H1 (cell line): ENCODE measurements at regions of chr18 and their contacts with region 1.

Region 1: DNA sequence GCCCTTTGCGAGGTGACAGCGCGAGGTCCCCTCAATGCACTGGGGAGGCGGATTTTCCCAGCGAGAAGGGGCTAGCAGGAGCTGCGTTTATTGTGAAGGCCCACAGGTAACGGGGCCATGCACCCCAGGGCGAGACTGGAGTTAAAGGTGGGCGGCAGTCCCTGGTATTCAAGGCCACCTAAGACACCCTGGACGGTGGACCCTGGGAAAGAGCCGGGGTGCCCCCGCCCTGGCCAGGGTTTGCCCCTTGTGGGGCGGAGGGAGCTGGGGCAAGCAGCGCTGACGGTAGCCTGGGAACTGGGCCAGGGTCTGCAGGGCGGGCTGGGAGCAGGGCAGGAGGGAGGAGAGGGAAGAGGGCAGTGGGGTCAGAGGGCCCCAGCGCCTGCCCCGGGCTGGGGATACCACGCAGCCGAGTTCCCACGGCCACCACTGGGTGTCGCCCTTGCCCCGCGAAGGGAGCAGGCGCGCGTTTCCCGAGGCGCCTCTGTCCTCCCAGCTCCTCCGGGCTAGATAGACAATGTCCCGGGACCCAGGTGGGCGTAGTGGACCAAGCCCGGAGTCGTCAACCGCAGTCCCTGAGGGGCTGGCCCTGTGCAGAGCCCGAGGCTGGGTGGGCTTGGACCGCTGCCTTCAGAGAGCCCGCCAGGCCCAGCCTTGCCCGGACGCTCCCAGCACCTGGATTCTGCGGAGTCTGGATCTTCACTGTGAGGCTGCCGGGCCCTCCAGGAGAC is 80.2 kb downstream of the SMAD4 start:
- DNase-seq: peak in 1 of 2 experiments; percentile 98
- H3K4me3 ChIP-seq: no peak overlapping the region
- H3K27ac ChIP-seq: no peak overlapping the region
- H3K4me1 ChIP-seq: peaks cover 0 to 2% (median 0%) of the 10 kb centered on the region in 4 experiments; a peak in 2 of 7 replicates
- H3K27me3 ChIP-seq: no peaks in the 10 kb centered on the region
- CTCF ChIP-seq: peak; percentile 90 to 99 (median 93)
- EP300 ChIP-seq: no peak
- POLR2A ChIP-seq: no peak
- RAD21 ChIP-seq: peak; percentile 98 to 99

Region 2: DNA sequence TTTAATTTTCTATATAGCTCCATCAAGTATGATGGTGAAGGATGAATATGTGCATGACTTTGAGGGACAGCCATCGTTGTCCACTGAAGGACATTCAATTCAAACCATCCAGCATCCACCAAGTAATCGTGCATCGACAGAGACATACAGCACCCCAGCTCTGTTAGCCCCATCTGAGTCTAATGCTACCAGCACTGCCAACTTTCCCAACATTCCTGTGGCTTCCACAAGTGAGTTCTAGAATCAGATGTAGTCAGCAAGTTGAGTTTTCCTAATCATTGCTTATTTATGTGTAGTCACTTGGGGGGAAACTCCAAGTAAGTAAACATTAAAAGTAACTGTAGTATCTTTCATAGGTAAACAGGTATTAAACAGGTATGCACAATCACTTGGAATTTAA is 55.5 kb before region 1 on chr18:
- CTCF ChIA-PET with region 1: no interaction called
- POLR2A ChIA-PET with region 1: no interaction called
- DNase-seq: no peak
- H3K4me3 ChIP-seq: no peak overlapping the region
- H3K27ac ChIP-seq: no peak overlapping the region
- H3K4me1 ChIP-seq: peaks cover 0 to 3% (median 0%) of the 10 kb centered on the region in 4 experiments; a peak in 1 of 7 replicates
- H3K27me3 ChIP-seq: no peaks in the 10 kb centered on the region
- CTCF ChIP-seq: no peak
- EP300 ChIP-seq: no peak
- POLR2A ChIP-seq: no peak
- RAD21 ChIP-seq: no peak

Region 3: DNA sequence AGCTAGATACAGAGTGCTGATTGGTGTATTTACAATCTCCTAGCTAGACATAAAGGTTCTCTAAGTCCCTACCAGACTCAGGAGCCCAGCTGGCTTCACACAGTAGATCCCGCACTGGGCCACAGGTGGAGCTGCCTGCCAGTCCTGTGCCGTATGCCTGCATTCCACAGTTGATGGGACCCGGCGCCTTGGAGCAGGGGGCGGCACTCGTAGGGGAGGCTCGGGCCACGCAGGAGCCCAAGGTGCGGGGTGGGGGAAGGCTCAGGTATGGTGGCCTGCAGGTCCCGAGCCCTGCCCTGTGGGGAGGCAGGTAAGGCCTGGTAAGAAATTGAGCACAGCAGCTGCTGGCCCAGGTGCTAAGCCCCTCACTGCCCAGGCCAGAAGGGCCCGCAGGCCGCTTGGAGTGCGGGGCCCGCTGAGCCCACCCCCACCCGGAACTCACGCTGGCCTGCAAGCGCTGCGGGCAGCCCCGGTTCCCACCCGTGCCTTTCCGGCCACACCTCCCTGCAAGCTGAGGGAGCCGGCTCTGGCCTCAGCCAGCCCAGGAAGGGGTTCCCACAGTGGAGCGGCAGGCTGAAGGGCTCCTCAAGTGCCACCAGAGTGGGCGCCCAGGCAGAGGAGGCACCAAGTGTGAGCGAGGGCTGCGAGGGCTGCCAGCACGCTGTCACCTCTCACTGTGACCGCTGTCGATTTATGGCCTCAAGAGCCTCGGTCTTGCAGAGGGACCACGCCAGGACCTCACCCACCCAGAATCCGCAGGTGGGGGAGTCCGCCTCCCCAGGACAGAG is 10.8 kb after region 1 on chr18:
- CTCF ChIA-PET with region 1: interaction called, 56 read pairs
- POLR2A ChIA-PET with region 1: no interaction called
- DNase-seq: no peak
- H3K4me3 ChIP-seq: no peak overlapping the region
- H3K27ac ChIP-seq: no peak overlapping the region
- H3K4me1 ChIP-seq: peaks cover 0 to 5% (median 0%) of the 10 kb centered on the region in 4 experiments; a peak in 1 of 7 replicates
- H3K27me3 ChIP-seq: no peaks in the 10 kb centered on the region
- CTCF ChIP-seq: peak; percentile 8 to 40 (median 18); a peak in 2 of 4 replicates
- EP300 ChIP-seq: no peak
- POLR2A ChIP-seq: no peak
- RAD21 ChIP-seq: peak; percentile 31 to 46; a peak in 3 of 4 replicates

Region 4: DNA sequence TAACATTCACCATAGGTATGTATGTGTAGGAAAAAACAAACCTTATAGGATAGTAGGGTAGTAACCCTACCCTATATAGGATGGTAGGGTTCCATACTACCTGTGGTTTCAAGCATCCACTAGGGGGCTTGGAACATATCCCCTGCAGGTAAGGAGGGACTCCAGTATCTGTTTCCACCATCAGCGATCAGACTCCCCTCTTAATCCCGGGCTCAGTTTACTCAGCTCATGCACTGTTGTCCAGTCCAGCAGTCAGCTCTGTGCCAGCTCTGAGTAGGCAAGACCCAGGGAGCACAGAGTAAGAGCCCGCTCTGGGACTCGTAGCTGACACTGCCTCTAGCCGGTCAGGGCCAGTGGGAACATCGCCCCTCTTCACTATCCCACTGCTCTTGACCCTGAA is 25.6 kb after region 1 on chr18:
- CTCF ChIA-PET with region 1: interaction called, 10 read pairs
- POLR2A ChIA-PET with region 1: no interaction called
- DNase-seq: no peak
- H3K4me3 ChIP-seq: no peak overlapping the region
- H3K27ac ChIP-seq: no peak overlapping the region
- H3K4me1 ChIP-seq: peaks cover 0 to 5% (median 0%) of the 10 kb centered on the region in 4 experiments; a peak in 1 of 7 replicates
- H3K27me3 ChIP-seq: no peaks in the 10 kb centered on the region
- CTCF ChIP-seq: peak; percentile 26 to 66 (median 64)
- EP300 ChIP-seq: no peak
- POLR2A ChIP-seq: no peak
- RAD21 ChIP-seq: peak; percentile 53 to 65

Region 5: DNA sequence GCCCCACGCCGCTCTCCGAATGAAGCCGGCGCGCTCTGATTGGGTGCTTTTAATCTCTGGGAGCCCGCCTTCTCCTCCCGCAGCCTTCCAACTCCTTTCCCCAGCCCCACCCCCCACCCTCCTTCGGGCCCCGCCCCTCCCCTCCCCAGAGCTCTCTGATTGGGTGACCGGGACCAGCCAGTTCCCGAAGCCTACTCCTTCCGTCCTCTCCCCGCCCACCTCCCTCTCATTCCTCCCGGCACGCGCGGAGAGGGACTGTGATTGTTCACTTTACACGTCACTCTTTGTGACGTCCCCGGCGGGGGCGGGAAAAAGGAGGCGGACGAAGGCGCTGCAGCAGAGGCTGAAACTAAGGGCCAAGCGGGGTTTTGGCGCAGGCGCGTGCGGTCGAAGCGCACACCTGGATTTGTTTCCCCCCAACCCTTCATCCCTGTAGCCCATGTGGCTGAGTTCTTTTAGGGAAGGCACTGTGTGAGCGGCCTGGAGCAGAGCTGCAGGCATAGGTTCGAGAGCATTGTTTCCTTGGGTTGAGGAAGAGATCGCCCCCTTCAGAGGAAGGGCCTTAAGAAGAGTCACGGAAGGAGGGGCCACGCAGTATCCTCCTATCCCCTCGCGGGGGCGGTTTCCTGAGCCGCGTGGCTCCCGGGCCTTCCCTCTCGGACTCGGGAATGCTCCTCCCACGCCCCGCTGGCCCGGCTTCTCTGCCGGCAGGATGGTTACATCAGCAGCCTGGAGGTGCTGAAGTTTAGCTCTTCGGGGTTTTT is 87.6 kb after region 1 on chr18 and contains the start of gene MEX3C:
- CTCF ChIA-PET with region 1: interaction called, 15 read pairs
- POLR2A ChIA-PET with region 1: interaction called, 4 read pairs
- DNase-seq: peak; percentile 98 to 99
- H3K4me3 ChIP-seq: peak within 1 kb of the TSS; percentile 97 to 100 (median 99)
- H3K27ac ChIP-seq: peak within 1 kb of the TSS; percentile 92; the same call in 1 of the 2 replicates
- H3K4me1 ChIP-seq: peaks cover 0 to 3% (median 1%) of the 10 kb centered on the region in 4 experiments; a peak in 3 of 7 replicates
- H3K27me3 ChIP-seq: no peaks in the 10 kb centered on the region
- CTCF ChIP-seq: peak; percentile 0 to 36 (median 24); a peak in 2 of 4 replicates
- EP300 ChIP-seq: no peak
- POLR2A ChIP-seq: peak; percentile 91 to 92
- RAD21 ChIP-seq: no peak
- total RNA-seq, gene MEX3C: 102 and 103 TPM in 2 replicates

Region 6: GRCh38 chr18:51278045-51278649 is 167.9 kb after region 1 on chr18:
- CTCF ChIA-PET with region 1: interaction called, 14 read pairs
- POLR2A ChIA-PET with region 1: no interaction called
- DNase-seq: peak; percentile 27 to 92
- H3K4me3 ChIP-seq: no peak overlapping the region
- H3K27ac ChIP-seq: no peak overlapping the region
- H3K4me1 ChIP-seq: peaks cover 0 to 11% (median 3%) of the 10 kb centered on the region in 4 experiments; a peak in 3 of 7 replicates
- H3K27me3 ChIP-seq: no peaks in the 10 kb centered on the region
- CTCF ChIP-seq: peak; percentile 83 to 94 (median 93)
- EP300 ChIP-seq: no peak
- POLR2A ChIP-seq: no peak
- RAD21 ChIP-seq: peak; percentile 89 to 95

Region 7: DNA sequence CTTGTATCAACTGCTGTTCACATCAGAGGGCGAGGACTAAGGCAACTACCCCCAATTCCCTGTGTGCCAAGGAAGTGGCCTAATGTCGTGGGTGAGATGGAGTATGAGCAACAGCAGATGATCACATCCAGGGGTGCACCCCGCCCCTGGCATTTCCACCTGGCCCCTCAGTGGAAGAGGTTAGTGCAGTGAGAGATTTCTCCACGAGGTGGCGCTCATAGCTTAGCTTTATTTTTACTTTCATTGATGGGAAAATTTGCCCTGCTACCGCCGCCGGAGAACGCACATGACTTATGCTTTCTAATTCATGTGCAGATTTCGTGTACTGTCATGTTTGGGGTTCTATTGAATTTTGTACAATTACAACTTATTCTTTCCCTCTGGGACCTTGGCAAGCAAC is 557.9 kb after region 1 on chr18:
- CTCF ChIA-PET with region 1: interaction called, 28 read pairs
- POLR2A ChIA-PET with region 1: no interaction called
- DNase-seq: peak in 1 of 2 experiments; percentile 90
- H3K4me3 ChIP-seq: no peak overlapping the region; a peak in 1 of 8 replicates
- H3K27ac ChIP-seq: no peak overlapping the region
- H3K4me1 ChIP-seq: peaks cover 0 to 3% (median 1%) of the 10 kb centered on the region in 4 experiments; a peak in 5 of 7 replicates
- H3K27me3 ChIP-seq: no peaks in the 10 kb centered on the region
- CTCF ChIP-seq: peak; percentile 63 to 81 (median 76)
- EP300 ChIP-seq: no peak
- POLR2A ChIP-seq: no peak
- RAD21 ChIP-seq: peak; percentile 94 to 95